Left cardiac atrium (tissue), 4 donors: ENCODE measurements at regions of chr1 and their contacts with region 1.

Region 1: DNA sequence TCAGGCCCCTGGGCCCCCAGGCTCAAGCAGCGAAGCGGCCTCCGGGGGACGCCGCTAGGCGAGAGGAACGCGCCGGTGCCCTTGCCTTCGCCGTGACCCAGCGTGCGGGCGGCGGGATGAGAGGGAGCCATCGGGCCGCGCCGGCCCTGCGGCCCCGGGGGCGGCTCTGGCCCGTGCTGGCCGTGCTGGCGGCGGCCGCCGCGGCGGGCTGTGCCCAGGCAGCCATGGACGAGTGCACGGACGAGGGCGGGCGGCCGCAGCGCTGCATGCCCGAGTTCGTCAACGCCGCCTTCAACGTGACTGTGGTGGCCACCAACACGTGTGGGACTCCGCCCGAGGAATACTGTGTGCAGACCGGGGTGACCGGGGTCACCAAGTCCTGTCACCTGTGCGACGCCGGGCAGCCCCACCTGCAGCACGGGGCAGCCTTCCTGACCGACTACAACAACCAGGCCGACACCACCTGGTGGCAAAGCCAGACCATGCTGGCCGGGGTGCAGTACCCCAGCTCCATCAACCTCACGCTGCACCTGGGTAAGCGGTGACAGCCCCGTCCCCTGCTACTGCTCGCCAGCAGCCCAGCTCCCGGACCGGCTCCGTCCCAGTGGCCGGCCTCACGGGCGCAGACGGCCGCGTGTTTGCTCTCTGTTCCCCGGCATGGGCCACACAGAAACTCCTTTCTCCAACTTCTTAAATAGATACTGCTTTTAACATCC is 539 bp downstream of the LAMC1 start:
- DNase-seq: peak; percentile 72
- ATAC-seq: peak; percentile 41 to 42

Region 2: GRCh38 chr1:182962554-182963115 is 61.1 kb before region 1 on chr1:
- intact Hi-C with region 1: loop called in 1 of 2 experiments (anchors 5 kb)
- DNase-seq: peak; percentile 84
- ATAC-seq: peak; percentile 98 to 100

Region 3: DNA sequence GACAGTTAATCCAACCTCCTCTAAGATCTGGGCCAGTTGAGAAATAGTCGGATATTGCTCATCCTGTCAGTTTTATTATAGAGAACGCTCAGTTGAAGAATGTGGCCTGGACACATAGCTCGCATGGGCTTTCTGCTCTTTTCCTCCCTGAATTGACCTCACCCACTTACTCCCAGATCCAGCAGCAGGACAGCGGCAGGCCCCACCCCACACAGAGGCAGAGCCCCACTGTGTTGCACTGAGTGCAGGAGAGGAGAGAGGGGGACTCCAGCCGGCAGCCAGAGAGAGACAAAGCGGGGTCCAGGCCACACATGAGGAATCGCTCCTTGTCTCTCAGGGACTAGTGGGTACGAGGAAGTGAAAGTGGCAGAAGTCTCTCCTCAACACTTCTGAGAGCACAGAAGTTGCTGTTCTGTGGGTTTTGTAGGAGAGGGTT is 78.1 kb after region 1 on chr1:
- intact Hi-C with region 1: loop called (anchors 5 to 10 kb)
- DNase-seq: peak; percentile 25
- ATAC-seq: peak in 1 of 2 donors; percentile 27

Region 4: DNA sequence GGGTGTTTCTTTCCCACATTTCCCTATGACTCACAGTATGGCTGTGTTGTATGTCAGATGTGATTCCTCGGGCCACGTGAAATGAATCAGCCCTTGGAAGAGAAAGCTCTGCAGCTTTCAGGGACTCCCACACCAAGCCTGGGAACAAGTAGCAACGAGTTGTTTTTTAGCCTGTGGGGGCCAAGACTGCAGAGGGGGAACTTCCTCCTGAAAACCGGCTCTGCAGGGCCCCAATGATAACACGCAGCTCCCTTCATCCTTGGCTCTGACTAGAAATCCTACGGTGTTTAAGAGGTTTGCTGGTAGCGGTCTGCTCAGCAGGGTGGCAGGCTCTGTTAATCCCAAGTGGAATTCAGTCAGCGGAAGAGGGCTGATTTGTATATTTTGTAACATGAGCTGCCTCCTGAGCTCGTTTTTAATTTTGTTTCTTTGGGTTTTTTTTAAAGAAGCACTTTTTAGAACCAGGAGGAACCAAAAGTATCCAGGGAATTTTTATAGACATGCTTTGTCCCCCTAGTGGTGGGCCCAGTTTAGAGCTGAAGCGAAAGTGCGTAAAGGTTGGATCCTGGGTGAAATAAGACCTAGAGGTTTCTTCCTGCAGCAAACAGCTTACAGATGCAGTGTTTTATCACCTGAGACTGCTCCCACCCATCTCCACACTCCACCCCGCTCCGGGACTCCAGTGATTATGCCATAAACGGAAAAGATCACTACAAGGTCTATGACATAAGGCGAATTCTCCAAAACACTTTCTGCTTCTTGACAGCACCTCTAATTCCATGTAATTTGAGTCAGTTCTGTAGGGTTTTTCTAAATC is 211.1 kb after region 1 on chr1:
- intact Hi-C with region 1: loop called in 1 of 2 experiments (anchors 10 kb)
- DNase-seq: peak; percentile 69
- ATAC-seq: peak; percentile 88 to 97